Right cardiac atrium (tissue), 5 donors: ENCODE measurements at regions of chr10 and their contacts with region 1.

Region 1: GRCh38 chr10:44974628-44975431 is 3.8 kb downstream of the DEPP1 start:
- DNase-seq: peak; percentile 79 to 92 (median 88)
- ATAC-seq: peak; percentile 74 to 79
- H3K4me3 ChIP-seq: peak overlapping the region; percentile 25
- H3K27ac ChIP-seq: peak overlapping the region; percentile 95
- H3K4me1 ChIP-seq: peaks cover 15% of the 10 kb centered on the region
- H3K27me3 ChIP-seq: no peaks in the 10 kb centered on the region

Region 2: GRCh38 chr10:44878706-44879530 is 95.9 kb before region 1 on chr10:
- intact Hi-C with region 1: loop called in 1 of 4 experiments (anchors 10 kb)
- DNase-seq: peak; percentile 89 to 96 (median 96)
- ATAC-seq: peak; percentile 90 to 93
- H3K4me3 ChIP-seq: peak overlapping the region; percentile 45
- H3K27ac ChIP-seq: peak overlapping the region; percentile 3
- H3K4me1 ChIP-seq: peaks cover 5% of the 10 kb centered on the region
- H3K27me3 ChIP-seq: no peaks in the 10 kb centered on the region

Region 3: GRCh38 chr10:44932517-44933450 is 42.0 kb before region 1 on chr10:
- intact Hi-C with region 1: loop called (anchors 2 to 5 kb)
- DNase-seq: peak; percentile 92 to 99 (median 97)
- ATAC-seq: peak; percentile 87 to 89
- H3K4me3 ChIP-seq: no peak overlapping the region
- H3K27ac ChIP-seq: peak overlapping the region; percentile 10
- H3K4me1 ChIP-seq: peaks cover 15% of the 10 kb centered on the region
- H3K27me3 ChIP-seq: no peaks in the 10 kb centered on the region

Region 4: GRCh38 chr10:45339894-45340293 is 365.1 kb after region 1 on chr10:
- intact Hi-C with region 1: no loop called
- DNase-seq: no peak
- ATAC-seq: no peak
- H3K4me3 ChIP-seq: no peak overlapping the region
- H3K27ac ChIP-seq: no peak overlapping the region
- H3K4me1 ChIP-seq: no peaks in the 10 kb centered on the region
- H3K27me3 ChIP-seq: no peaks in the 10 kb centered on the region